Activated CD4-positive, alpha-beta memory T cell treated with anti-CD3 and anti-CD28 coated beads, Interleukin-2, amount 10 ng/mL, durations not matched to agents 7 days and 5 days (primary cell): ENCODE measurements at regions of chr2 and their contacts with region 1.

Region 1: DNA sequence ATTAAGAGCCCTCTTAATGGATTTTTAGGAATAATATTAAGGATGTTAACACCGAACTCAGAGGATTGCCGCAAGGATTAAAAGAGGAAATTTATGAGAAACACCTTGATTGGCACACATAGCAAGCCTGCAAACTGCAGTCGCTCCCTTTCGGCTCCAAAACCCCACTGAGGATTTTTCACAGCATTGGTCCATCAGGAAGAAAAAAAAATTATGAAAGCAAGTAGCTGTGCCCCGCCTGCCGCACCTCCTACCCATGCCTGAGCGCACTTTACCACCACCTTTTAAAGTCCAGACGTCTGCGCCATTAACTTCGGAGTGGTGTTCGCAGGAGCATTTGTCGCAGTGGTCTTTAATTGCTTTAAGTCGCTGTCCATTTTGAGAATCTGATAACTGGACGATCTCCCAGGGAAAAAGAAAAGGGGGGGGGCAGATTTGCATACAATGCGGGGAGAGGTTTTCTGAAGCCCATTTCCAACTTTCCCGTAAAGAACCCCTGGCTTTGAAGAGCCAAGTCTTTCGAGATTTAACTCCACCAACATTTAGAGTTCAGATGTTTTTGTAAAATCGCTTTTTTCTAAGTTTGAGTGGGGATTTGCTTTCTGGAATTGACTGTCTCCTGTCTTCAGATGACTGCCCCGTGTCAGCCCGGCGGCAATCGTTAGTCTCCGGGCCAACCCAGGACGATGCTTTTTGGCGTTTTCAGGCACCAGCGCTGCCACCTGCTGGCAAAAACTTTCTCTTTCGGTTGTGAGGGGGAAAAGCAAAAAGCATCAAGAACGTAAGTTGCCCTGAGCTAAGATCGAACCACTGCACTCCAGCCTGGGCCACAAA is 914 bp upstream of the TRABD2A start:
- DNase-seq: peak; percentile 90
- H3K4me3 Mint-ChIP-seq: peak overlapping the region; percentile 91
- H3K27ac Mint-ChIP-seq: peak overlapping the region; percentile 87
- H3K4me1 Mint-ChIP-seq: peaks cover 51% of the 10 kb centered on the region
- H3K27me3 Mint-ChIP-seq: no peaks in the 10 kb centered on the region

Region 2: GRCh38 chr2:84459018-84459943 is 422.5 kb before region 1 on chr2 and contains the start of gene SUCLG1:
- CTCF ChIA-PET with region 1: no interaction called
- POLR2A ChIA-PET with region 1: interaction called, 14 read pairs
- DNase-seq: peak; percentile 89
- H3K4me3 Mint-ChIP-seq: peak within 1 kb of the TSS; percentile 87
- H3K27ac Mint-ChIP-seq: peak within 1 kb of the TSS; percentile 77
- H3K4me1 Mint-ChIP-seq: peaks cover 40% of the 10 kb centered on the region
- H3K27me3 Mint-ChIP-seq: no peaks in the 10 kb centered on the region
- total RNA-seq, gene SUCLG1: 66.1 to 69.0 TPM

Region 3: GRCh38 chr2:84781942-84782716 is 99.7 kb before region 1 on chr2:
- CTCF ChIA-PET with region 1: interaction called, 5 read pairs
- POLR2A ChIA-PET with region 1: interaction called, 18 read pairs
- DNase-seq: peak; percentile 75
- H3K4me3 Mint-ChIP-seq: no peak overlapping the region
- H3K27ac Mint-ChIP-seq: peak overlapping the region; percentile 97
- H3K4me1 Mint-ChIP-seq: peaks cover 67% of the 10 kb centered on the region
- H3K27me3 Mint-ChIP-seq: no peaks in the 10 kb centered on the region

Region 4: DNA sequence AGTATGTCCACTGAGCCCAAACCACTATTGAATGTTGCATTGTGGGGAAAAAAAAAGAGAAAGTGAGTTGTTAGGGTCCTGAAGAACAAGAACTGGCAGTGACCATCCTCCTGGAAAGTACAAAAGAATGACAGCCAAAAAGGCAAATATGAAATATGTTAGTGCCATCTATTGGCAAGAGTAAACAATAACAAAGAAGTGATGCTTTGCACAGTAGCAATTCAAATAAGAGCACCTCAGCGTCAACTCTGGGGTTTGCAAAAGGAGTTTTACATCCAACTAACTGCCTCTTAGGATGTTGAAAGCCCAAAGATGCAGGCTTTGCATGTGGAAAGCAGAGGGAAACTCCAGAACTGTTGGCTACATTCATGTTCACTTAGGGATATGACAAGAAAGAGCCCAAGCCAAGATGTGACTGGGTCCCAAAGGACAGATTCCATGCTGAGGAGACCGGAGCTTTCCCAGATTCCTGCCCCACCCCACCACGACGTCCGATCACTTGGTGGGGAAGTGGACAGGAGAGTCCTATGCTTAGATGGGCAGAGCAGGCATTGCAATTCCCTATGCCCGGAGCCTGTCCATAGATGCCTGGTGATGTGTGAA is 16.5 kb before region 1 on chr2:
- CTCF ChIA-PET with region 1: interaction called, 12 read pairs
- POLR2A ChIA-PET with region 1: interaction called, 6 read pairs
- DNase-seq: no peak
- H3K4me3 Mint-ChIP-seq: no peak overlapping the region
- H3K27ac Mint-ChIP-seq: no peak overlapping the region
- H3K4me1 Mint-ChIP-seq: peaks cover 43% of the 10 kb centered on the region
- H3K27me3 Mint-ChIP-seq: no peaks in the 10 kb centered on the region

Region 5: GRCh38 chr2:84905181-84906107 is 23.6 kb after region 1 on chr2 and contains the start of gene TMSB10:
- CTCF ChIA-PET with region 1: interaction called, 39 read pairs
- POLR2A ChIA-PET with region 1: interaction called, 467 read pairs
- DNase-seq: peak; percentile 91
- H3K4me3 Mint-ChIP-seq: peak within 1 kb of the TSS; percentile 89
- H3K27ac Mint-ChIP-seq: peak within 1 kb of the TSS; percentile 94
- H3K4me1 Mint-ChIP-seq: peaks cover 67% of the 10 kb centered on the region
- H3K27me3 Mint-ChIP-seq: no peaks in the 10 kb centered on the region
- total RNA-seq, gene TMSB10: 5,686 to 5,768 TPM

Region 6: DNA sequence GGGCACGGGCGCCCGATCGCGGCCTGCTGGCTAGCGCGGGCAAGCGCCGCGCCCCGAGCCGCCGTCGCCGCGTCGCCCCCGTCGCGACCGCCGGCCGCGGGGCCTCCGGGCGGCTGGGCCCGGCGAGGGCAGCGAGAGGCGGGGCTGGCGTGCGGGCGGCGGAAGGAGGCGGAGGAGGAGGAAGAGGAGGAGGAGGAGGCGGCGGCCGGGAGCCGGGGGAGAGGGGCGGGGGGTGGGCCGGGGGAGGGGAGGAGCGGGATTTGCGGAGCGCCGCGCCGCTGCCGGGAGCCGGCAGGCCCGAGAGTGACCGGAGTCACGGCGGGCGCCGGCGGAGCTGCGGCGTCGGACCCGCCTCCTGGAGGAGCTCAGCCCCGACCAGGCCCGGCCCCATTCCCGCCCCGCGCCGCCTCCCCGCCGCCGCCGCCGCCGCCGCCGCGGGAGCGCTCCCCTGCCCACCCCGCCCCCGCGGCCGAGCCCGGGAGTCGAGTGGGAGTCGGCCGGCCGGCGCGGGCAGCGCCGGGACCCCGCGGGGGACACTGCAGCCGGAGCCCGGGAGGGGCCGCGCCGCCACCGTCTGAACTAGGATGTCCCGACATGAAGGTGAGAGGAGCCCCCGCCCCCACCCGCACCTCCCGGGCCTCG is 89.2 kb after region 1 on chr2 and contains the start of gene KCMF1:
- CTCF ChIA-PET with region 1: no interaction called
- POLR2A ChIA-PET with region 1: interaction called, 26 read pairs
- DNase-seq: peak; percentile 76
- H3K4me3 Mint-ChIP-seq: peak within 1 kb of the TSS; percentile 96
- H3K27ac Mint-ChIP-seq: peak within 1 kb of the TSS; percentile 100
- H3K4me1 Mint-ChIP-seq: peaks cover 47% of the 10 kb centered on the region
- H3K27me3 Mint-ChIP-seq: no peaks in the 10 kb centered on the region
- total RNA-seq, gene KCMF1: 87.0 to 92.9 TPM